ENCODE measurements at regions of chr11 and their contacts with region 1.

Region 1: GRCh38 chr11:43852057-43852636 is 28.5 kb upstream of the ALKBH3 start:
- DNase-seq: peak; percentile 83
- ATAC-seq: peak; percentile 93
- H3K4me3 Mint-ChIP-seq: no peak overlapping the region
- H3K27ac Mint-ChIP-seq: no peak overlapping the region
- H3K4me1 Mint-ChIP-seq: peaks cover 5% of the 10 kb centered on the region
- H3K27me3 Mint-ChIP-seq: no peaks in the 10 kb centered on the region
- CTCF ChIP-seq: peak; percentile 80

Region 2: GRCh38 chr11:43311791-43312607 is 540.1 kb before region 1 on chr11 and contains the start of gene API5:
- CTCF ChIA-PET with region 1: no interaction called
- POLR2A ChIA-PET with region 1: no interaction called
- intact Hi-C with region 1: no loop called
- DNase-seq: peak; percentile 95
- ATAC-seq: peak; percentile 96
- H3K4me3 Mint-ChIP-seq: peak within 1 kb of the TSS; percentile 99
- H3K27ac Mint-ChIP-seq: peak within 1 kb of the TSS; percentile 96
- H3K4me1 Mint-ChIP-seq: peaks cover 43% of the 10 kb centered on the region
- H3K27me3 Mint-ChIP-seq: no peaks in the 10 kb centered on the region
- CTCF ChIP-seq: peak; percentile 62
- total RNA-seq, gene API5: 156 to 169 TPM

Region 3: DNA sequence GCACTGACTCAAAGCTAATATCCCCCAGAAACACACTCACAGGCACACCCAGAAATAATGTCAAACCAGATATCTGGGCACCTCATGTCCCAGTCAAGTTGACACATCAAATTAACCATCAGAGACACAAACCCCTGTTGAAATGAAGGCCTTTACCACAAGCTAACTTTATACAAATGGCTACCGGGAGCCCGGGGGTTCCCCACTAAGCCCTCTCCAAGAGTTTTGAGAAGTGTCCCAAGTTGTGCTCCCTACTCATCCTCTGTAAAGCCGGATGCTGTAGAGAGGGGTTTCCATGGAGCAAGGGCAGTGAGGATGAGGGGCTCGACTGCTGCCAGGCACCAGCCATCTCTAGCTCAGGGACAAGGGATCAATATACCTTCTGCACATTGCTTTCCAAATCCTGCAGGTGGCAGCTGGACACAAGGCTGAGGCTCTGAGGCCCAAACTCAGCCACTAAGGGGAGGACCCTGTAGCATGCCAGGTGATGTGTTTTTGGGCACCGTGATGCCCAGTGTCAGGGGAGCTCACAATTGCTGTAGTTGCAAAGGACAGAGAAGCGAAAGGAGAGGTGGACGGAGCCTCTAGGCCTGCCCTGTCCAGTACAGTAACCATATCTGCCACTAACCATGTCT is 347.7 kb before region 1 on chr11:
- CTCF ChIA-PET with region 1: interaction called, 12 read pairs
- POLR2A ChIA-PET with region 1: no interaction called
- intact Hi-C with region 1: no loop called
- DNase-seq: peak; percentile 11
- ATAC-seq: peak; percentile 45
- H3K4me3 Mint-ChIP-seq: no peak overlapping the region
- H3K27ac Mint-ChIP-seq: no peak overlapping the region
- H3K4me1 Mint-ChIP-seq: peaks cover 5% of the 10 kb centered on the region
- H3K27me3 Mint-ChIP-seq: peaks cover 4% of the 10 kb centered on the region
- CTCF ChIP-seq: no peak

Region 4: DNA sequence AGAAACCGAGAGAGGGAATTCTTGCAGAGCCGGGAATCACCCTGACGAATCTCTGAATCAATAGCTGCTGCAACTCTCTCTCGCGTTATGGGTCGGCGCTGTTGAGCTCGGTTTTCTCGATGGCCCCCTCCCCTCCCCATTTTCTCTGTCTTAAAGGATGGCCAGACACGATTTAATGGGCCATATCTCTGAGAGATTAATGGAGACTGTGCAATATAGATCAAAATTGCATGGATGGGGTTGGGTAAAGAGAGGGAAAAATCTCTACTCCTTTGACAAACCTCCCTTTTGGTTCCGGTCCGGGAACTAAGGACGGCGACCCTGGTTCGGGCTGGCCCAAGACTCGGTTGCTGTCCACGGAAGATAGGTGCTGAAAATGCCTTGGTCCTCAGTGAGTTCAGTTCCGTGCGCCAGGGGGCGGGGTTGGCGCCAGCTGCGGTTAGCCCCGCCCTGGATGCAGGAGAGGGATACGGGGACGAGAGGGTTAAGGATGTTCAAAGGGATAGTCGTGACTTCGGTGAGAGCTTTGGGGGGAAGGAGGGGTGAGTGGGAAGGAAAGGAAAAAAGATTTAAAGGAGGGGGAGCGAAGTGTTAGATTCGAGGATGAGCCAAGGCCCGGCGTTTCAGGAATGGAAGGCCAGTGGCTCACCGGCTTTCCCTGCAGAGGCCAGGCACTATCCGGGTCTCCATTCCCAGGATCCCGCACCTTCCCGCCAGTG is 275.2 kb before region 1 on chr11:
- CTCF ChIA-PET with region 1: interaction called, 15 read pairs
- POLR2A ChIA-PET with region 1: no interaction called
- intact Hi-C with region 1: loop called (anchors 5 kb)
- DNase-seq: peak; percentile 56
- ATAC-seq: no peak
- H3K4me3 Mint-ChIP-seq: no peak overlapping the region
- H3K27ac Mint-ChIP-seq: no peak overlapping the region
- H3K4me1 Mint-ChIP-seq: peaks cover 37% of the 10 kb centered on the region
- H3K27me3 Mint-ChIP-seq: peaks cover 86% of the 10 kb centered on the region
- CTCF ChIP-seq: no peak

Region 5: DNA sequence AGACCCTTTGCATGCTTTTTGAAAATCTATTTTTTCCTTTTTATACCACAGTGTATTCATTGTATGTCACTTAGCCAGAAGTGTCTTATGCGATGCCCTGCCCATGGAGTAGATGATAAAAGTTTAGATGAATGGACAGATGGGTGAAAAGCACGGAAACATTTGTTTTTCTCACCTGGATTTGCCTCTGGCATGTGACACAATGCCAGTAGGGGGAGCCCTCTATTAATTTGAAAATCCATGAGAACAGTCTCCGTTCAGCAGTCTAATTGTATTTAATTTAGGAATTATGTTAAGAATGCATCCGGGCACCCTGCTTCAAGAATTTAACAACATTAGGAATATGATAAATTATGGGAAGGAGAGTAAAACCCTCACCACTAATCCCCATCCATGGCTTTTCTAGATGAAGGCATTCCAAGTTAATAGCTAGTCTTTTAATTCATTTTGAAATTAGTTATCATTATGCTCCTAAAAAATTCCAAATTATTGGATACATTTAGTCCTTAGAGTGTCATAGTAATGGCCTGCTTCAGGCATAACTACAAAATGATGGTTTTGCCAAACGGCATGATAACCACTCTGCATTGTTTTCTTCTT is 26.8 kb before region 1 on chr11:
- CTCF ChIA-PET with region 1: interaction called, 39 read pairs
- POLR2A ChIA-PET with region 1: no interaction called
- intact Hi-C with region 1: no loop called
- DNase-seq: peak; percentile 22
- ATAC-seq: no peak
- H3K4me3 Mint-ChIP-seq: no peak overlapping the region
- H3K27ac Mint-ChIP-seq: no peak overlapping the region
- H3K4me1 Mint-ChIP-seq: peaks cover 6% of the 10 kb centered on the region
- H3K27me3 Mint-ChIP-seq: no peaks in the 10 kb centered on the region
- CTCF ChIP-seq: peak; percentile 68

Region 6: GRCh38 chr11:43837879-43838278 is 14.3 kb before region 1 on chr11:
- CTCF ChIA-PET with region 1: interaction called, 17 read pairs
- POLR2A ChIA-PET with region 1: interaction called, 4 read pairs
- intact Hi-C with region 1: no loop called
- DNase-seq: no peak
- ATAC-seq: no peak
- H3K4me3 Mint-ChIP-seq: no peak overlapping the region
- H3K27ac Mint-ChIP-seq: no peak overlapping the region
- H3K4me1 Mint-ChIP-seq: no peaks in the 10 kb centered on the region
- H3K27me3 Mint-ChIP-seq: no peaks in the 10 kb centered on the region
- CTCF ChIP-seq: no peak

Measured in activated CD8-positive, alpha-beta T cell treated with anti-CD3 and anti-CD28 coated beads for 36 hours (primary cell).